Right cardiac atrium (tissue), 5 donors: ENCODE measurements at regions of chr9 and their contacts with region 1.

Region 1: DNA sequence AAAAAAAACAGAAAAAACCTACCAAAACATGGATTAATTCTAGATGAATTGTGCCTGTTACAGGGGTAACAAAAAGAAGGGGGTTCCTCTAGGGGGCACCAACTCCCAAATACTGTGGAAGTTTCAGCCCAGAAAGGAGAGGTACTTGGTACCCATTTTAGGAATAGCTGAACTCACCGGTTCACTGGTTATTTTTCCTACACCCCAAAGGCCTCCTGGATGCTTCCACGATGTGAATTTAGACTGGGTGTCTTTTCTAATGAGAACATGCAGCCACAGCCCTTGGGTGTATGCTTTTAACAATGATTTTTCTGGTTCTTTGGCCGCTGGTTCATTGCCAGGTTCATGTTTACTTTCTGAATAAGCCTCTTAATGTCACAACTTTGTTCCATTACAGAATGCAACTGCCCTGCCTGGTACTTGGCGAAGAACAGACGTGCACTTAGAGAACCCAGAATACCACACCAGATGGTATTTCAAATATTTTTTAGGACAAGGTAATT is 46.7 kb downstream of the GARNL3 start:
- DNase-seq: no peak
- ATAC-seq: peak; percentile 20 to 55
- H3K4me3 ChIP-seq: no peak overlapping the region
- H3K27ac ChIP-seq: peak overlapping the region; percentile 72
- H3K4me1 ChIP-seq: peaks cover 9% of the 10 kb centered on the region
- H3K27me3 ChIP-seq: no peaks in the 10 kb centered on the region

Region 2: DNA sequence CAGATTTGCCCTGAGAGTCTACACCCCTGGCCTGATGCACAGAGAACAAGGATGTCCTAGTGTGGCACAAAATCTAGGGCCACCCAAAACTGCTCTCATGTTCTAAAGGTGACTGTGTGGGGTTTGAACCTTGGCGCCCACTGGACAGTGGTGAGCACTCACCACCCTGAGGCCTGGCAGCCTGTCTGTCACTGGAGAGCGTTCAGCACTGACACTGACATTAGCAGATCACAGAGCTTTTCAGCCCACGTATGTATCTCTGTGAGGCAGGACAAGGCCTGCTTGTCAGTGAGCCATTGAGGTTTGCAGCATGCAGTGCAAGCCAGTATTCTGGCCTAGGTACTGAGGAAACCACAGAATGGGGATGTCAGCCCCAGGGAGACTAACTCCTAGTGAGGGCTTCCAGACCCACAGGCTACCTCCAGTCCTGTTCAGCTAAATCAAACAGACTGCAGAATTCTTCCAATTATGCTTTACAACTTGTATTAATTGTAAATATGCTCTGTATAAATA is 46.8 kb after region 1 on chr9:
- intact Hi-C with region 1: loop called in 1 of 4 experiments (anchors 5 kb)
- DNase-seq: no peak
- ATAC-seq: peak in 1 of 2 donors; percentile 13
- H3K4me3 ChIP-seq: no peak overlapping the region
- H3K27ac ChIP-seq: no peak overlapping the region
- H3K4me1 ChIP-seq: no peaks in the 10 kb centered on the region
- H3K27me3 ChIP-seq: no peaks in the 10 kb centered on the region

Region 3: GRCh38 chr9:127423934-127424675 is 112.8 kb after region 1 on chr9 and contains the start of gene ZNF79:
- intact Hi-C with region 1: no loop called
- DNase-seq: peak; percentile 94 to 98 (median 98)
- ATAC-seq: peak; percentile 98
- H3K4me3 ChIP-seq: peak within 1 kb of the TSS; percentile 76
- H3K27ac ChIP-seq: peak within 1 kb of the TSS; percentile 96
- H3K4me1 ChIP-seq: no peaks in the 10 kb centered on the region
- H3K27me3 ChIP-seq: no peaks in the 10 kb centered on the region
- total RNA-seq, gene ZNF79: 6.3 to 7.9 (median 7.6) TPM